ENCODE measurements at regions of chr1 and their contacts with region 1.

Region 1: GRCh38 chr1:214551436-214552173 is at the start of gene PTPN14:
- DNase-seq: peak; percentile 97
- H3K4me3 Mint-ChIP-seq: peak within 1 kb of the TSS; percentile 89
- H3K27ac Mint-ChIP-seq: peak within 1 kb of the TSS; percentile 90
- H3K4me1 Mint-ChIP-seq: peaks cover 39% of the 10 kb centered on the region
- H3K27me3 Mint-ChIP-seq: no peaks in the 10 kb centered on the region
- CTCF ChIP-seq: peak; percentile 77
- total RNA-seq, gene PTPN14: 240 and 243 TPM in 2 replicates

Region 2: DNA sequence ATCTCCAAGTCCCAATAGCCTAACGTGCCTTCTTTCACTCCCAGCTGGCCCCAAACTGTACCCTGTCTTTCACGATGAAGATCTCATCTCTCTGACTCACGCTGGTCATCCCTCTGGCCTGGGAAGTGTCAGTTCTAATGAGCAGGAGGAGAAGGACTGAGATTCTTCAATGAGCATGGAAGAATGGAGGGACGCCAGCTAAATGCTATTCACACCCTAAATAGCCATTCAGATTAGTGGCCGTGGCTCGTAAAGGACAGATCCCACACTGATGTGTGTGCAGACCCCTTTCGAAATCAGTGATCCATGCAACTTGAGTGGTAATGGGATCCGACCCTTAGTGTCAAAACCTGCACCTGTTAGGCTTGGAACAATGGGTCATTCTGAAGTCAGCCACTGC is 346.6 kb before region 1 on chr1:
- CTCF ChIA-PET with region 1: no interaction called
- POLR2A ChIA-PET with region 1: no interaction called
- intact Hi-C with region 1: no loop called
- DNase-seq: no peak
- H3K4me3 Mint-ChIP-seq: no peak overlapping the region
- H3K27ac Mint-ChIP-seq: no peak overlapping the region
- H3K4me1 Mint-ChIP-seq: no peaks in the 10 kb centered on the region
- H3K27me3 Mint-ChIP-seq: peaks cover 2% of the 10 kb centered on the region
- CTCF ChIP-seq: no peak

Region 3: GRCh38 chr1:214416417-214416816 is 135.2 kb before region 1 on chr1:
- CTCF ChIA-PET with region 1: interaction called, 6 read pairs
- POLR2A ChIA-PET with region 1: interaction called, 126 read pairs
- intact Hi-C with region 1: no loop called
- DNase-seq: peak; percentile 80
- H3K4me3 Mint-ChIP-seq: no peak overlapping the region
- H3K27ac Mint-ChIP-seq: peak overlapping the region; percentile 69
- H3K4me1 Mint-ChIP-seq: peaks cover 67% of the 10 kb centered on the region
- H3K27me3 Mint-ChIP-seq: no peaks in the 10 kb centered on the region
- CTCF ChIP-seq: no peak

Region 4: DNA sequence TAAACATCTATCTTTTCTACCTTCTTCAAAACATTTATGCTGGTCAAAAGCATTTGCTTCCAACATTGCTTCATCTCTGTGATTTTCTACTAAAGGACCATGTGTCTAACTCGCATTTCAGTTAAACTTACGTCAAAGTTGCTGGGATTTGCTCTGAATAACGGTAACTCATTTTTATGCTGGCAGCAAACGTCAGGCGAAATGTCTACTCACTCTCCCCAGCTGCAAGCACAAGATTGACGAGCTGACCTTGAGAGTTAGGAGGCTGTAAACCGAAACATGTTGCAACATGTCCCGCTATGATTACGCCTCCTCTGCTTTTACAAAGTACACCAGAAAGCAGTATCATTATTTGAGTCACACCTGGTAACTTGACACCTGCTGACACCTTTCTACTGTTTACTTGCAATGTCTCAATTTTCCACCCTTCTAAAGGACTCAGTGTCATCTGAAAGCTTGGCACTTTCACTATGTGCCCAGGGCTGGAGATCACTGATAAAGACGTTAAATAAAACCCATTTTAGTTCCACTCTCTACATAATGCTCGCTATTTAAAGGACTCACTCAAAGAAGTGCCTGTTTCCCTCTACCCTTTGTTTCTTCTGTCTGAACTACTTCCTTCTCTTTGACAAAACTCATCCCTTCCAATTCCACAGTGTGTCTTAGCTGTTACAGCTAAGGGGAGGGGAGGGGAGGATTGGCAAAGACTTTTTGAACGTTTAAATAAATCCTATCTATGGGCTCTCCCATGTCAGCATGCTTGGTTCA is 112.1 kb before region 1 on chr1:
- CTCF ChIA-PET with region 1: interaction called, 31 read pairs
- POLR2A ChIA-PET with region 1: interaction called, 319 read pairs
- intact Hi-C with region 1: loop called (anchors 1 kb)
- DNase-seq: peak; percentile 100
- H3K4me3 Mint-ChIP-seq: peak overlapping the region; percentile 65
- H3K27ac Mint-ChIP-seq: peak overlapping the region; percentile 99
- H3K4me1 Mint-ChIP-seq: peaks cover 61% of the 10 kb centered on the region
- H3K27me3 Mint-ChIP-seq: no peaks in the 10 kb centered on the region
- CTCF ChIP-seq: no peak

Region 5: GRCh38 chr1:214506972-214507482 is 44.6 kb before region 1 on chr1:
- CTCF ChIA-PET with region 1: interaction called, 6 read pairs
- POLR2A ChIA-PET with region 1: interaction called, 11 read pairs
- intact Hi-C with region 1: no loop called
- DNase-seq: no peak
- H3K4me3 Mint-ChIP-seq: no peak overlapping the region
- H3K27ac Mint-ChIP-seq: no peak overlapping the region
- H3K4me1 Mint-ChIP-seq: peaks cover 44% of the 10 kb centered on the region
- H3K27me3 Mint-ChIP-seq: no peaks in the 10 kb centered on the region
- CTCF ChIP-seq: no peak

Region 6: GRCh38 chr1:214537219-214537618 is 14.4 kb before region 1 on chr1:
- CTCF ChIA-PET with region 1: interaction called, 39 read pairs
- POLR2A ChIA-PET with region 1: interaction called, 223 read pairs
- intact Hi-C with region 1: no loop called
- DNase-seq: peak; percentile 61
- H3K4me3 Mint-ChIP-seq: no peak overlapping the region
- H3K27ac Mint-ChIP-seq: no peak overlapping the region
- H3K4me1 Mint-ChIP-seq: peaks cover 47% of the 10 kb centered on the region
- H3K27me3 Mint-ChIP-seq: no peaks in the 10 kb centered on the region
- CTCF ChIP-seq: no peak

Region 7: GRCh38 chr1:214602764-214603657 is 51.4 kb after region 1 on chr1 and contains the start of gene CENPF:
- CTCF ChIA-PET with region 1: interaction called, 6 read pairs
- POLR2A ChIA-PET with region 1: interaction called, 50 read pairs
- intact Hi-C with region 1: no loop called
- DNase-seq: peak; percentile 100
- H3K4me3 Mint-ChIP-seq: peak within 1 kb of the TSS; percentile 96
- H3K27ac Mint-ChIP-seq: peak within 1 kb of the TSS; percentile 94
- H3K4me1 Mint-ChIP-seq: peaks cover 16% of the 10 kb centered on the region
- H3K27me3 Mint-ChIP-seq: no peaks in the 10 kb centered on the region
- CTCF ChIP-seq: peak; percentile 28
- total RNA-seq, gene CENPF: 88.8 and 135 TPM in 2 replicates

Region 8: DNA sequence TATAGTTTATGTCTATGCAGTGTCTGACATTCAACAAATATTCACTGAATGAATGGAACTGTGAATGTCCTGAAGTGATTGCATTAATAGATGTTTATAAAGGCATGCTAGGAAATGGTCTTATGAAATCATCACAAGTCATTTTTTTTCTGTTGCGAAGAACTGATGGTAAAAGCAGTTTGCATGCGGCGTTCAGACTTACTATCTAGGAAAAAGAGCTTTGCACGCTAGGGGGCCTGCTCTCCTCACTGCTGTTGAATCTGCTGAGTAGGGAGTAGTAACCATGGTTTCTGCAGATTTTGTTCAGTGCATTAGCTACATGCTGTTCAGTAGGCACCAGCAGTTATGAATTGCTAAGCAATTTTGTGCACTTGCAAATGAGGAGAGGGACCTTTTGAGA is 109.3 kb after region 1 on chr1:
- CTCF ChIA-PET with region 1: no interaction called
- POLR2A ChIA-PET with region 1: no interaction called
- intact Hi-C with region 1: no loop called
- DNase-seq: peak; percentile 42
- H3K4me3 Mint-ChIP-seq: no peak overlapping the region
- H3K27ac Mint-ChIP-seq: no peak overlapping the region
- H3K4me1 Mint-ChIP-seq: peaks cover 13% of the 10 kb centered on the region
- H3K27me3 Mint-ChIP-seq: no peaks in the 10 kb centered on the region
- CTCF ChIP-seq: peak; percentile 82

Region 9: GRCh38 chr1:214808845-214809460 is 257.3 kb after region 1 on chr1:
- CTCF ChIA-PET with region 1: no interaction called
- POLR2A ChIA-PET with region 1: no interaction called
- intact Hi-C with region 1: no loop called
- DNase-seq: peak; percentile 84
- H3K4me3 Mint-ChIP-seq: no peak overlapping the region
- H3K27ac Mint-ChIP-seq: no peak overlapping the region
- H3K4me1 Mint-ChIP-seq: no peaks in the 10 kb centered on the region
- H3K27me3 Mint-ChIP-seq: no peaks in the 10 kb centered on the region
- CTCF ChIP-seq: peak; percentile 93

Measured in MCF 10A (cell line).